GM12878 (cell line): ENCODE measurements at regions of chr4 and their contacts with region 1.

Region 1: GRCh38 chr4:139030614-139031235 is 15.1 kb downstream of the NOCT start:
- DNase-seq: peak; percentile 61
- ATAC-seq: peak; percentile 85
- H3K4me3 ChIP-seq: no peak overlapping the region
- H3K27ac ChIP-seq: no peak overlapping the region
- H3K4me1 ChIP-seq: peaks cover 3% of the 10 kb centered on the region; the same call in 1 of the 2 replicates
- H3K27me3 ChIP-seq: no peaks in the 10 kb centered on the region
- CTCF ChIP-seq: peak; percentile 81 to 94 (median 84); a peak in 5 of 6 replicates
- EP300 ChIP-seq: no peak
- POLR2A ChIP-seq: no peak
- RAD21 ChIP-seq: peak; percentile 85

Region 2: DNA sequence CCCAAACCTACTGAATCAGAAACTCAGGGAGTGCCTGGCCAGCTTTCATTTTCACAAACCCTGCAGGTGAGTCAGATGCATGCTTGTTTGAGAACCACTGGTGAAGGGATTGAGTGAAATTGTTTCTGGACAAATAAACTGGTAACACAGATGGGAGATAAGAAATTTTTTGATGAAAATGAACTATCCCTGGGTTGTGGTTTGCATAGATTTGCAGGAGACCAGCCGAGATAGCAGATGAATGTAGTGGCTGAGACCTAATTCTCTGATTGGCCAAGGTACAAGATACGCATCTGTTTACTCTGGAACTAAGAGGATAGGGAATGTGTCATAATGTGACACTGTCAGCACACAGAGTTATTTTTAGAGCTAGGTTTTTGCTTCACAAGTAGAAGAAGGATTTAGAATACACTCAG is 132.9 kb before region 1 on chr4:
- CTCF ChIA-PET with region 1: no interaction called
- POLR2A ChIA-PET with region 1: no interaction called
- RAD21 ChIA-PET with region 1: no interaction called
- SMC1A ChIA-PET with region 1: no interaction called
- in situ Hi-C with region 1: no loop called
- intact Hi-C with region 1: no loop called
- DNase-seq: no peak
- ATAC-seq: no peak
- H3K4me3 ChIP-seq: no peak overlapping the region
- H3K27ac ChIP-seq: no peak overlapping the region
- H3K4me1 ChIP-seq: no peaks in the 10 kb centered on the region; the same call in 1 of the 2 replicates
- H3K27me3 ChIP-seq: no peaks in the 10 kb centered on the region
- CTCF ChIP-seq: no peak
- EP300 ChIP-seq: no peak
- POLR2A ChIP-seq: no peak
- RAD21 ChIP-seq: no peak

Region 3: GRCh38 chr4:139042981-139043460 is 12.3 kb after region 1 on chr4:
- CTCF ChIA-PET with region 1: interaction called, 27 read pairs
- POLR2A ChIA-PET with region 1: interaction called, 3 read pairs
- RAD21 ChIA-PET with region 1: interaction called, 10 read pairs
- SMC1A ChIA-PET with region 1: interaction called, 8 read pairs
- in situ Hi-C with region 1: no loop called
- intact Hi-C with region 1: no loop called
- DNase-seq: no peak
- ATAC-seq: no peak
- H3K4me3 ChIP-seq: no peak overlapping the region
- H3K27ac ChIP-seq: no peak overlapping the region
- H3K4me1 ChIP-seq: no peaks in the 10 kb centered on the region
- H3K27me3 ChIP-seq: no peaks in the 10 kb centered on the region
- CTCF ChIP-seq: no peak
- EP300 ChIP-seq: no peak
- POLR2A ChIP-seq: no peak
- RAD21 ChIP-seq: no peak

Region 4: DNA sequence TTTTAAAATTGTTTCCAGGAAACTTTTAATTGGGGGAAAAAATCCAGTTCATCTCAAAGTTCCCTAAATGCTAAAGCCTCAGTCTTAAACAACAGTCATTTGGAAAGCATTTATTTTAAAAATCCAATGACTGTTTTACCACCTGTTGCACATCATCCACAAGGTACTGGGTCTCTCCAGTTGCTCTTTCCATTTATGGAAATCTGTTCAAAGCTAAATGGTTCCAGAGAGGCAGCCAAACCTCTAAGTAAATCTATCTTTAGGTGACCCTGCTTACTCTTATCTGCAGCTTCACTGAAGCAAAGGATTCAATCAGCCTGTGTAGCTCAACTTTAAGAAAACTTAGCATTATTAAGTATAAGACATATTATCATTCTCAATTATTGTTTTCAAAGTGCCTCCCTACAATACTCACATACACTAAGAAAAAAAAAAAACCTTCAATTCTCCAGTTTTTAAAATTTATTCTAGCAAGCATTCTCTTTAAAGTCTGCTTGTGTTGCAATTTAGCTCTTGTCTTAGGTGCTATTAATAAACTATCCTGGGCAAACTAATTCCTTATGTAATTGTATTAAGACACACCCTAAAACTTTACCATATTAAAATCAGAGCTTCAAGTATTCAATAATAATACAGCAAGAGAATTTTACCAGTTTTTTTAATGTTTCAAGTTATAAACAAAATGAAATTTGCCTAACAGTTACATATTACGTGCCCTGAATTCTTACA is 45.5 kb after region 1 on chr4:
- CTCF ChIA-PET with region 1: interaction called, 51 read pairs
- POLR2A ChIA-PET with region 1: interaction called, 7 read pairs
- RAD21 ChIA-PET with region 1: interaction called, 15 read pairs
- SMC1A ChIA-PET with region 1: interaction called, 20 read pairs
- in situ Hi-C with region 1: no loop called
- intact Hi-C with region 1: no loop called
- DNase-seq: no peak
- ATAC-seq: peak; percentile 9
- H3K4me3 ChIP-seq: no peak overlapping the region
- H3K27ac ChIP-seq: no peak overlapping the region
- H3K4me1 ChIP-seq: no peaks in the 10 kb centered on the region; the same call in 1 of the 2 replicates
- H3K27me3 ChIP-seq: no peaks in the 10 kb centered on the region
- CTCF ChIP-seq: no peak
- EP300 ChIP-seq: no peak
- POLR2A ChIP-seq: no peak
- RAD21 ChIP-seq: no peak

Region 5: GRCh38 chr4:139099366-139099982 is 68.7 kb after region 1 on chr4:
- CTCF ChIA-PET with region 1: interaction called, 69 read pairs
- POLR2A ChIA-PET with region 1: no interaction called
- RAD21 ChIA-PET with region 1: interaction called, 27 read pairs
- SMC1A ChIA-PET with region 1: interaction called, 13 read pairs
- in situ Hi-C with region 1: no loop called
- intact Hi-C with region 1: loop called (anchors 2 kb)
- DNase-seq: peak; percentile 45
- ATAC-seq: peak; percentile 93
- H3K4me3 ChIP-seq: no peak overlapping the region
- H3K27ac ChIP-seq: no peak overlapping the region
- H3K4me1 ChIP-seq: no peaks in the 10 kb centered on the region
- H3K27me3 ChIP-seq: no peaks in the 10 kb centered on the region
- CTCF ChIP-seq: peak; percentile 81 to 88 (median 83)
- EP300 ChIP-seq: no peak
- POLR2A ChIP-seq: no peak
- RAD21 ChIP-seq: peak; percentile 92

Region 6: DNA sequence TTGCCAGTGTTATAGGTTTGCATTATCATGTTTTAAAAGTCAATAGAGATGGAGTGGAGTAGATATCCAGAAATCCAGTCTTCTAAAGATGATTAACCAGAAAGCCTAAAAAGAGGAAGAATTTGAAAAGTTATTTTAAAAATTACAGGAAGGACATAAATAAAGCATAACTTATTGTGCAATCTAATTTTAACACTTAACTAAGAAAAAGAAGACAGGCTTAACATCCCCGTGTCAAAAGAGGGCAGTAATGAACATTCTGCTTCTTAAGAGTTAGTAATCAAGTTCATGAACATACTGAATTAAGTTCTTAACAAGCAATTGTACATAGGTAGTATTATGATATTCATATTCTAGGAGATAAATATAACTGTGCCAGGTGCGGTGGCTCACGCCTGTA is 107.0 kb after region 1 on chr4:
- CTCF ChIA-PET with region 1: no interaction called
- POLR2A ChIA-PET with region 1: no interaction called
- RAD21 ChIA-PET with region 1: no interaction called
- SMC1A ChIA-PET with region 1: no interaction called
- in situ Hi-C with region 1: no loop called
- intact Hi-C with region 1: no loop called
- DNase-seq: no peak
- ATAC-seq: no peak
- H3K4me3 ChIP-seq: no peak overlapping the region
- H3K27ac ChIP-seq: no peak overlapping the region
- H3K4me1 ChIP-seq: no peaks in the 10 kb centered on the region
- H3K27me3 ChIP-seq: no peaks in the 10 kb centered on the region
- CTCF ChIP-seq: no peak
- EP300 ChIP-seq: no peak
- POLR2A ChIP-seq: no peak
- RAD21 ChIP-seq: no peak

Region 7: GRCh38 chr4:139177868-139178611 is 147.3 kb after region 1 on chr4:
- CTCF ChIA-PET with region 1: interaction called, 36 read pairs
- POLR2A ChIA-PET with region 1: interaction called, 3 read pairs
- RAD21 ChIA-PET with region 1: interaction called, 6 read pairs
- SMC1A ChIA-PET with region 1: interaction called, 3 read pairs
- in situ Hi-C with region 1: no loop called
- intact Hi-C with region 1: loop called (anchors 5 kb)
- DNase-seq: peak; percentile 48
- ATAC-seq: peak; percentile 74
- H3K4me3 ChIP-seq: peak overlapping the region; percentile 79
- H3K27ac ChIP-seq: peak overlapping the region; percentile 57
- H3K4me1 ChIP-seq: peaks cover 4% of the 10 kb centered on the region; the same call in 1 of the 2 replicates
- H3K27me3 ChIP-seq: peaks cover 2 to 3% of the 10 kb centered on the region in 2 experiments; a peak in 2 of 4 replicates
- CTCF ChIP-seq: no peak
- EP300 ChIP-seq: peak; percentile 13 to 32; a peak in 1 of 4 replicates
- POLR2A ChIP-seq: peak; percentile 81
- RAD21 ChIP-seq: no peak

Region 8: DNA sequence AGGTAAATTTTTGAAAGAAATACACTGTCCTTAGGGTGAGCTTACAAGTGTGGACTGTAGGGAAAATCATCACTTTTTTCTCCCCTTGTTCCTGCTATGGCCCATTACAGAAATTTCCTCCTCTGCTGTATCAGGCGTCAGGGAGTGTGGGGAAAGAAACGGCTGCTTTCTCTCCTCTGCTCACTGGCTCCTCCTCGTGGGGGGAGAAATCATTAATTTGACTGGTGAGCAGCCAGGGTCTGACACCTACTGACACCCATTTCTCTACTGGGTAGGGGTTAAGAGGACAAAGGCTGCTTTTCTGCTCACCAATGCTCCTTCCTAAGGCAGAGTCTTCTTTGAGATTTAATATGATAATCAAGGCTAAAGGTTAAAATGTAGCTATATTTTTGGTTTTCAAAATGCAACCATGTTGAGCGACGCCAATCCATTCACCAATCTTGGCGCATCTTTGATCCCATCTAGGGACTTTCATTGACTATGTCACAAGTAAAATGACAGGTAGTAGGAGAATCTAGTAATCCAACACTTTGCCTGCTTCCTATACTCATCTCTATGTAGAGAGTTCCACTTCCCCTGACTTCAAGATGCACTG is 500.2 kb after region 1 on chr4:
- CTCF ChIA-PET with region 1: interaction called, 16 read pairs
- POLR2A ChIA-PET with region 1: no interaction called
- RAD21 ChIA-PET with region 1: interaction called, 5 read pairs
- SMC1A ChIA-PET with region 1: interaction called, 3 read pairs
- in situ Hi-C with region 1: no loop called
- intact Hi-C with region 1: loop called (anchors 10 kb)
- DNase-seq: no peak
- ATAC-seq: peak; percentile 85
- H3K4me3 ChIP-seq: no peak overlapping the region
- H3K27ac ChIP-seq: no peak overlapping the region
- H3K4me1 ChIP-seq: peaks cover 4% of the 10 kb centered on the region; the same call in 1 of the 2 replicates
- H3K27me3 ChIP-seq: no peaks in the 10 kb centered on the region
- CTCF ChIP-seq: peak; percentile 75 to 87 (median 76)
- EP300 ChIP-seq: no peak
- POLR2A ChIP-seq: no peak
- RAD21 ChIP-seq: peak; percentile 81

Region 9: GRCh38 chr4:140163029-140163810 is 1132.5 kb after region 1 on chr4:
- CTCF ChIA-PET with region 1: no interaction called
- POLR2A ChIA-PET with region 1: no interaction called
- RAD21 ChIA-PET with region 1: no interaction called
- SMC1A ChIA-PET with region 1: no interaction called
- in situ Hi-C with region 1: no loop called
- intact Hi-C with region 1: no loop called
- DNase-seq: no peak
- ATAC-seq: no peak
- H3K4me3 ChIP-seq: no peak overlapping the region
- H3K27ac ChIP-seq: no peak overlapping the region
- H3K4me1 ChIP-seq: no peaks in the 10 kb centered on the region
- H3K27me3 ChIP-seq: no peaks in the 10 kb centered on the region; a peak in 1 of 4 replicates
- CTCF ChIP-seq: no peak
- EP300 ChIP-seq: no peak
- POLR2A ChIP-seq: no peak
- RAD21 ChIP-seq: no peak